Left colon (tissue), 2 donors: ENCODE measurements at regions of chr17 and their contacts with region 1.

Region 1: DNA sequence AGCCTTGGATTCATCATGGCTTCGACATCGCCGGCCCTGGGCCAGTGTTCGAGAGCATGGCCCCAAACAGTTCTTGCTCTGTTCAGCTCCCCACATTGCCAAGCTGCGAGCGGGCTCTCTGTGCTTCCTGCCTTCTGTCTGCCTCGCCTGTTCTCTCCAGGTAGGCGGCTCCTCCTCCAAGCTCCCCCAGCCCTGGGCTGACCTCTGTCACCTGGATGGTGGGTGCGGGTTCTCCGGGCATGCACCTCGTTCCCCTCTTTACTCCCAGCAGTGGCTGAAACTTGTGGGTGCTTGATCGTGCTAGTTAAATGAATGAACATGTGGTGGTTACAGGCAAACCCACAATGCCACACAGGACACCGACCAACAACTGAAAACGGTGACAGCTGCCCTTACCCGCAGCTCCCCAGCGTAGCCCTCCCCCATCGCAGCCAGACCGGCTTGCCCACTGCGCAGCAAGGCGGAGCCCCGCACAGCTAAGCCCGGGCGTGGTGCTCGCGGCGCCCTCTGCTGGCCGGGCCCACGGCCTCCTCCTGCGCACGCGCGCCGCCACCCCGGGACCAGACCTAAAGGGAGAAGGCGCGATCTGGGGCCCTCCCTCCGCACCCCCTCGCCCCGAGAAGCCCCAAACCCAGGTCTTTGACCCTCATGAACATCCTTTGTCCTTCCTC is 23.0 kb upstream of the EIF1 start:
- DNase-seq: peak; percentile 89 to 93
- ATAC-seq: peak; percentile 87

Region 2: GRCh38 chr17:40622509-40622928 is 1043.2 kb before region 1 on chr17:
- intact Hi-C with region 1: loop called in 1 of 2 experiments (anchors 10 kb)
- DNase-seq: no peak
- ATAC-seq: no peak

Region 3: GRCh38 chr17:40803617-40804082 is 862.1 kb before region 1 on chr17:
- intact Hi-C with region 1: loop called in 1 of 2 experiments (anchors 5 kb)
- DNase-seq: peak; percentile 62 to 89
- ATAC-seq: peak; percentile 100

Region 4: GRCh38 chr17:41724476-41725050 is 58.9 kb after region 1 on chr17:
- intact Hi-C with region 1: no loop called
- DNase-seq: no peak
- ATAC-seq: no peak